ENCODE measurements at regions of chr16 and their contacts with region 1.

Region 1: GRCh38 chr16:12087901-12088421 is 111.4 kb downstream of the SNX29 start:
- DNase-seq: no peak
- ATAC-seq: no peak
- H3K4me3 ChIP-seq: no peak overlapping the region
- H3K27ac ChIP-seq: no peak overlapping the region
- H3K4me1 ChIP-seq: peaks cover 7% of the 10 kb centered on the region; the same call in 1 of the 2 replicates
- H3K27me3 ChIP-seq: no peaks in the 10 kb centered on the region
- CTCF ChIP-seq: no peak

Region 2: GRCh38 chr16:11949527-11949926 is 138.4 kb before region 1 on chr16:
- CTCF ChIA-PET with region 1: interaction called, 15 read pairs
- POLR2A ChIA-PET with region 1: no interaction called
- in situ Hi-C with region 1: no loop called
- intact Hi-C with region 1: no loop called
- DNase-seq: peak; percentile 38
- ATAC-seq: peak; percentile 95
- H3K4me3 ChIP-seq: no peak overlapping the region
- H3K27ac ChIP-seq: no peak overlapping the region
- H3K4me1 ChIP-seq: 0 out of 2 replicates have a peak, but pooled peaks cover 3% of the 10 kb centered on the region
- H3K27me3 ChIP-seq: no peaks in the 10 kb centered on the region
- CTCF ChIP-seq: peak; percentile 79

Region 3: DNA sequence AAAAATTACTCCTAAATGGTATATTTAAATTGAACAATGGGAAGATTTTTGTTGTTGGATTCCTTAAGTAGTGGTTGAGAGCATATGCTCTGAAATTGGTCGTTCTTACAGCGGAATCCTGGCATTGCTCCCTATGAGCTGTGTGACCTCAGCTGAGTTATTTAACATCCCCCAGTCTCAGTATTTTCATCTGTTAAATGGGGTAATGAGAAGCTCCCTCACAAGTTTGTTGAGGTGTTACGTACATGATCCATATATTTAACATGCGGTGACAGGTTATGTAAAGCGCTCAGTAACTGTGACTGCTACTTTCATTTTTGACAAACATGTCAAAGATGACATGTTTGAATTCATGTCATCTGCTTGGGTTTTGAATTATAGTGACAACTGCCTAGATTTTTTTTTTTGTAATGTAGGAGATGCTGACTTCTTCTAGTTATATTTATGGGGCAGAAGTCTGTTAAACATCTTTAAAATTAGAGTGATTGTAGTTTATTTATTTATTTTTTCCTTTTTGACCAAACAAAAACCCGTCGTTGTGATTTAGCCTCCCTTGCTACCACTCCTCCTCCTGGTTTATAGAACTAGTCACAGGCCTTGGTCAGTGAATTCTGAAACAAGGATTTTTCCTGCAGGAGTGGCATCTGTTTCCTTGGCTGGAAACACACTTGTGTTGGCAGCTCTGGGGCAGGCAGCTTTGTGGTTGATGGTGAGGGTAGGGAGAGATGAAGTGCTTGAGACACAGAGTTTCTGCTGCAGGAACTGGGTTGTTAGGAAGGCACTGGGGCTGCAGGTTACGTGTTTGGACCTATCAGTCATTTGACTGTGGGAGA is 157.3 kb after region 1 on chr16:
- CTCF ChIA-PET with region 1: no interaction called
- POLR2A ChIA-PET with region 1: no interaction called
- in situ Hi-C with region 1: no loop called
- intact Hi-C with region 1: no loop called
- DNase-seq: no peak
- ATAC-seq: no peak
- H3K4me3 ChIP-seq: no peak overlapping the region
- H3K27ac ChIP-seq: no peak overlapping the region
- H3K4me1 ChIP-seq: no peaks in the 10 kb centered on the region
- H3K27me3 ChIP-seq: no peaks in the 10 kb centered on the region
- CTCF ChIP-seq: no peak